Pancreas (tissue), 10 donors: ENCODE measurements at regions of chr21 and their contacts with region 1.

Region 1: GRCh38 chr21:34345091-34345871 is 18.5 kb upstream of the KCNE2 start:
- DNase-seq: no peak
- ATAC-seq: no peak
- H3K4me3 ChIP-seq: no peak overlapping the region
- H3K27ac ChIP-seq: no peak overlapping the region
- H3K4me1 ChIP-seq: no peaks in the 10 kb centered on the region
- H3K27me3 ChIP-seq: no peaks in the 10 kb centered on the region
- CTCF ChIP-seq: no peak

Region 2: DNA sequence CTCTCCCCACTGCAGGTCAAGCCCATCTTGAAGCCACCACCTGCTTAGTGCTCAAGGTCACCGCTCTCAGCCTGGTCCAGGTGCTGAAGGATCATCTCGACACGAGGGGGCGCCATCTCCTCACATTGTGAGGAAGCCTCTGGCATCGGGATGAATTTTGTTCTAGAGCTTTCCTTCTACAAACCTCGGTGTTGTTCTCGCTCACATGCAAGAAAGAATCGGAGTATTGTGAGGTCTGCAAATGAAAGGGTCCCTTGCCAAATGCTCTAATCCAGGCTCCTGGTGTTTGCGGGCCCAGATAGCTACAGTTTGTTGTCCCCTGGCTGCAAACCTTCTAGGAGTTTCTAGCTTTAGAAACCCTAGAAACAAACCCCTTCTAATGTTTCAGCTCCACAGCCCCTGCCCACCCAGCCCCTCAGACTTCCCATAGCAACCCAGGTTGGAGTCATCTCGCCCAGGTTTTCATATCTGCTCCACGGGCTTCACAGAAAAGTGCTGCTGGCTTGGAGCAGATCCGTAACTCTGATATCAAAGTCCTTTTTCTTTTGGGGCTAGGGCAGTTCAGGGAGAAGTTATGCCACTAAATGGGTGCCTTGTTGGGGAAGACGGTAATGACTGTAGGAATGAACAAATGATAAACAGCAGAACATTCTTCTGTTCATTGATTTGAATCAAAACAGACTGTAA is 421.1 kb before region 1 on chr21:
- intact Hi-C with region 1: loop called in 1 of 3 experiments (anchors 5 kb)
- DNase-seq: peak; percentile 77 to 97 (median 90)
- ATAC-seq: peak; percentile 97 to 100 (median 100)
- H3K4me3 ChIP-seq: no peak overlapping the region
- H3K27ac ChIP-seq: no peak overlapping the region
- H3K4me1 ChIP-seq: no peaks in the 10 kb centered on the region
- H3K27me3 ChIP-seq: no peaks in the 10 kb centered on the region
- CTCF ChIP-seq: peak; percentile 74 to 92 (median 86)

Region 3: GRCh38 chr21:33940164-33940880 is 405.0 kb before region 1 on chr21:
- intact Hi-C with region 1: loop called in 1 of 3 experiments (anchors 5 kb)
- DNase-seq: no peak
- ATAC-seq: peak in 2 of 4 donors; percentile 52 to 59
- H3K4me3 ChIP-seq: no peak overlapping the region
- H3K27ac ChIP-seq: no peak overlapping the region
- H3K4me1 ChIP-seq: no peaks in the 10 kb centered on the region
- H3K27me3 ChIP-seq: no peaks in the 10 kb centered on the region
- CTCF ChIP-seq: no peak

Region 4: DNA sequence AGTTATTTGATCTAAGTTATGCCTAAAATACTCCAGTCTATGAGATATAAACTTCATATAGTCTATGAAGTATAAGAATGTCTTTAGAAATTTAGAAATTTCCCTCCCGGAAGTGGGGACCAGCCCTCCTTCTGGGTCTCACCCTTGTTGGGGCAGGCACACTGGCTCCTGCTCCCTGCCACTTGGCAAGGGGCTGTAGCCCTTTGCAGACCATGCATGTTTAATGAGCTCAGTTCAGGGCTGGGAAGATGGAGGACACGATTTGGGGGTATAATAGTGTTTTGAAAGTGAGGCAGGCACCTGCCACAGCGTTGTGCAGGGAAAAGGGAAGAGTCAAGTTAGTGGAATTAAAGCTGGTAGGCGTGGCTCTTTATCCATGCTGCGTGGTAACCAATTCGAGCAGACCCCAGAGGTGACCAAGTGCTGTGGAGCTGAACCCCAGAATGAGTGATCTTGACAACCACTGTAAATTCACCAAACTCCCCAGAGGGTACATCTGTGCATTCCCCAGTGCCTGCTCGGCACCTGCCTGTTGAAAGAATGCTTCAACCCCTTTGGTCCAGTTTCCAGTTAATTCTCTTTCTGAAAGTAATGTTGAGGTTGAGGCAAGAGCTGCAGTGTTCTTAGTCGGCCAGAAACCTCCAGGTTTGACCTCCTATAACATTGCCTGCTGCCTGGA is 1890.9 kb after region 1 on chr21:
- intact Hi-C with region 1: no loop called
- DNase-seq: no peak
- ATAC-seq: no peak
- H3K4me3 ChIP-seq: no peak overlapping the region
- H3K27ac ChIP-seq: no peak overlapping the region
- H3K4me1 ChIP-seq: peaks cover 0 to 13% (median 7%) of the 10 kb centered on the region in 3 donors
- H3K27me3 ChIP-seq: no peaks in the 10 kb centered on the region
- CTCF ChIP-seq: no peak